ENCODE measurements at regions of chr21 and their contacts with region 1.

Region 1: GRCh38 chr21:17925000-17925610 is 105.9 kb upstream of the C21orf91 start:
- DNase-seq: peak; percentile 66 to 76 (median 74)
- ATAC-seq: peak; percentile 100
- H3K4me3 ChIP-seq: no peak overlapping the region
- H3K27ac ChIP-seq: no peak overlapping the region
- H3K4me1 ChIP-seq: no peaks in the 10 kb centered on the region
- H3K27me3 ChIP-seq: no peaks in the 10 kb centered on the region
- CTCF ChIP-seq: peak; percentile 74 to 78 (median 75)
- EP300 ChIP-seq: no peak
- POLR2A ChIP-seq: no peak
- RAD21 ChIP-seq: peak; percentile 48 to 76

Region 2: DNA sequence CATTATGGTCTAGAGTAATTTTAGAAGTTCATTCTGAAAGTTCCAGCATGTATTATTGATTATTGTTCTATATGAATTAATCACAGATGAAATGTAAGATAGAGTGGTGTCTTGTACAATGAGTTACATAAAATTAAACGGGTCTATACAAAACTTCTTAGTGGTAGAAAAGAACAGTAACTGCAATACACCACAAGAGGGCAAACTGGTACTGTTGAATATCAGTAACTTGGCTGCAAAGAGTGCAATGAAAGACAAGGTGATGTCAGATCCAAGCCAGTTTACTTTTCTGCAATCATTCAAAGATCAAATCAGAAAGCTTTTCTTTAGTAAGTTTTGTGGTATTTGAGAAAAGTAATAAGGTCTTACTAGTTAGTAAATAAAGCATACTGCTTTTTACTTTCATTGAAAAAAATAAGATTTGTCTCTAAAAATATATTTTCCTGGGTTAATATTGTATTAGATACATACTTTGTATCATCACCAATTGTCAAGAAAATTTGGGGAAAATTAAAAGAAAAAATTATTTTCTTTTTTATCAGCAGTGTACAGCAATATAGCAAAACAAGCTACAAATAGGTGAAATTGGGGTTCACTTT is 246.0 kb before region 1 on chr21:
- CTCF ChIA-PET with region 1: interaction called, 3 read pairs
- POLR2A ChIA-PET with region 1: no interaction called
- in situ Hi-C with region 1: no loop called
- intact Hi-C with region 1: loop called (anchors 1 kb)
- DNase-seq: peak; percentile 54 to 68 (median 64)
- ATAC-seq: peak; percentile 93
- H3K4me3 ChIP-seq: no peak overlapping the region
- H3K27ac ChIP-seq: no peak overlapping the region
- H3K4me1 ChIP-seq: no peaks in the 10 kb centered on the region
- H3K27me3 ChIP-seq: no peaks in the 10 kb centered on the region
- CTCF ChIP-seq: peak; percentile 62 to 85 (median 65); a peak in 5 of 6 replicates
- EP300 ChIP-seq: no peak
- POLR2A ChIP-seq: no peak
- RAD21 ChIP-seq: peak; percentile 91 to 97

Measured in K562 (cell line).